GM10248 (cell line): ENCODE measurements at regions of chr1 and their contacts with region 1.

Region 1: DNA sequence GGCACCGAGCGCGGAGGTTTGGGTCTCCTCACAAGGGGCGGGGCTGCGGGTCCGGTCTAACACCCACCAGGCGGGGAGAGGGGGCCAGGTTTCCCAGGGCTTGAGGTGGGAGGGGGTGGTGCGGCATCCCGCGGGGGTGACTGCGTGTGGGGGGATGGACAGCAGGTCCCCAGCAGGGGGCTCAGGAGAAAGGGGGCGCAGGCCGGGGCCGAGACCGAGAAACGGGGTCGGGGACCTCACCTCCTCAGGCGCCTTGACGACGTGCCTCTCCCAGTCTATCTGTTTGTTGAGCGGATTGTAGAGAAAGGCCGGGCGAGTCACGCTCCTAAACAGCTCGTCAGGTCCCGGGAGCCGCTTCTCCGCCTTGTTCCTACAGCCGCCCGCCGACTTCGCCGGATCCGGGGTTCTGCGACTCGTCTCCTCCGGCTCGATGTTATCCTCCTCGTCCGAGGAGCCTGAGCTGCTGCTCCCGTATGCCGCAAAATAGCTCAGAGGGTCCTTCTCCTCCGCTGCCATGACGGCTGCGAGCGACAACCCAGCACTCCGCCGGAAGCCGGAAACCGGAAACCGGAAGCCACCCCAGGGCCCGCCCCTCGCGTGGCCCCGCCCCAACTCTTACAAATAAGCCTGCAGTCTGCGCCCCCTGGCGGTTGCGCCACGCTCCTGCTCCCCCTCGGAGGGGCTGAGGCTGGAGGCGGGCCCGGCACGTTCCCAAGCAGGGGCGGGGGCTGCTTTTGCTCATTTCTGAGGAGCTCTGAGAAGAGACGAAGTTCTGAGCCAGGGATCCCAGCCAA is at the start of gene C1orf52:
- DNase-seq: peak; percentile 93
- CTCF ChIP-seq: peak; percentile 95

Region 2: DNA sequence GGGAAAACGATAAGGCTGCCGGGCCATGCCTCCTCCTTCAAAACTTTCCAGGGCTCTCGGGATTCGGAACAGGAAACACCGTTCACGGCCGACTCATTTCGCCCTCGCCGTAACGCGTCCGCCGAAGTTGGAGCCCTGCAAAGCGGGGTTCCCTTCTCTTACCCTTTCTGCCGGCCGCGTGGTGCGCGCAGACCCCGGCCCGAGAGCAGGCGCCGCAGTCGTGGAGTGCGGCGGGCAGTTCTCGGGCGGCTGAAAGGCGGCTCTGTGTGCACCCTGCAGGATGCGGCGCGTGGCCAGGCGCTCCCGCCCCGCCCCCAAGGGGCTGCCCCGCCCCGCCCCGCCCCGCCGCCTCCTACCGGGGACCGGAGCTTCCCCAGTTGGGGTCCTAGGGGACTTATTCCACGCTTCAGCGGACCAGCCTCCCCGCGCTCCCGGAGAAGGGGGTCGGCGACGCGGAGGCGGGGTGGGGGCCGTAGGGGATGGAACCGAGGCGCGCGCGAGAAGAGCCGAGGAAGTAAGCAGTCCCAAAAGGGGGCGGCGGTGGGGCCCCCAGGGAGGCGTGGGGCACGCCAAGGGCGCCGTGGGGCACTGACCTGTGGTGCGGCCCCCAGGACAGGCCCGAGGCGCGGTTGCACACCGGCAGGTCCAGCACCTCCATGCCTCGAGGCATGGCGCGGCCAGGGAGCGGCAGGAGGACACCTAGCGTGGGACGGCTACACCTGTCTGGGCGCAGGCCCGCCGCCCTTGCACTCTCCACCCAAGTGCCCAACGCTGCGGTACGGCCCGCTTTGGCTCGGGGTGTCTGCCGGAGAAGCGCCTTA is 262.3 kb before region 1 on chr1 and contains the start of gene MCOLN2:
- CTCF ChIA-PET with region 1: interaction called, 10 read pairs
- POLR2A ChIA-PET with region 1: no interaction called
- DNase-seq: peak; percentile 88
- CTCF ChIP-seq: peak; percentile 21

Region 3: GRCh38 chr1:85230305-85230980 is 28.9 kb before region 1 on chr1:
- CTCF ChIA-PET with region 1: interaction called, 15 read pairs
- POLR2A ChIA-PET with region 1: no interaction called
- DNase-seq: no peak
- CTCF ChIP-seq: no peak

Region 4: DNA sequence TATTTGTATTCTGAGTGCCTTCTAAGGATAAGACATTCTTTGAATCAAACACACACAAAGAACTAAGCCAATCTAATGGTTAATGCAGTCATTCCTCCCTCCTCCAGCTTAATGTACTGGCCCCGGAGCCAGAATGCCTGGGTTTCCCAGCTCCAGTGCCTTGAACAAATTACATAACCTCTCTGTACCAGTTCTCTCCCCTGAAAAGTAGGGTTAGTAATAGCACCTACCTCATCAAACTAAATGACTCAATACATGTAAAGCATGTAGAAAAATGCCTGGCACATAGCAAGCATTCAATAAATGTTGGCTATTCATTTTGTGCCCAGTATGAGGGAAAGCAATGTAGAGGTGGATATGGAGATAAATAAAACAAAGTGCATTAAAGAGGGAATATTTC is 13.9 kb before region 1 on chr1:
- CTCF ChIA-PET with region 1: interaction called, 20 read pairs
- POLR2A ChIA-PET with region 1: interaction called, 3 read pairs
- DNase-seq: no peak
- CTCF ChIP-seq: no peak